Esophagus muscularis mucosa (tissue), 4 donors: ENCODE measurements at regions of chr2 and their contacts with region 1.

Region 1: DNA sequence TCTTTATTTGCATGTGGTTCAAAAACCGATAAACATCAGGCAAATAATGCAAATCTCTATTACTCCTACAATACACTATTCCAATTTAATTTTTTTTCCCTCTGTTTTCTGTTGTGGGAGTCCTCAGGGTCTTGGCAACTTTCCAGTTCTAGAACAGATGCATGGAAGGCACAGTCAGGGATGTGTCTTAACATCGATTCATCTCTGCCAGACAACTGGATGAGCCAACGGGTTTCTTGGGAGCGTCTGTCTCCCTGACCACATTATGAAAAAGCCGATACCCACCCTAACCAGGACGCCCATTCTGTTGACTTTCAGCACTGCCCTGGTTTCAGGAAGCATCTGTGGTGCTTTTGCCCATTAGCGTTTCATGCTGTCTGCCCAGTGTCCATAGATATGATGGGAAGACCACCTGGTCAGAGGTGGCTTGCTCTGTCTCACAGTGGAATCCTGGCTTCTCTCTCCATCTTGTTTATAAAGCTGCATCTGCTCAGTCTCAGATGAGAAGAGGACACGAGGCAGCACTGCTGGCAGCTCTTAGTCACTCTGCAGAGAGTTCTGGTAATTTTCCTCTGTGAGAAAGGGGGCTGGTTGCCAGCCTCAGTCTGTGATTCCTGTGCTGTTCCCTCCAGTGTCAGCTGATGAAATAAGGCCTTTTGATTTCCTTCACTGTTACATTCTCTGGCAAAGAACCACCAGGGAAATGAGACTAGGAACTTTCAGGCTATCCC is 57.9 kb upstream of the KCNE4 start:
- DNase-seq: peak; percentile 93
- H3K4me3 ChIP-seq: peak overlapping the region; percentile 15 to 45 (median 30)
- H3K27ac ChIP-seq: peak overlapping the region; percentile 85 to 92 (median 87)
- H3K4me1 ChIP-seq: peaks cover 24 to 34% (median 25%) of the 10 kb centered on the region in 4 donors
- H3K27me3 ChIP-seq: no peaks in the 10 kb centered on the region
- CTCF ChIP-seq: no peak
- EP300 ChIP-seq: no peak
- POLR2A ChIP-seq: no peak

Region 2: GRCh38 chr2:222769446-222769845 is 224.6 kb before region 1 on chr2:
- intact Hi-C with region 1: no loop called
- DNase-seq: no peak
- H3K4me3 ChIP-seq: no peak overlapping the region
- H3K27ac ChIP-seq: no peak overlapping the region
- H3K4me1 ChIP-seq: no peaks in the 10 kb centered on the region
- H3K27me3 ChIP-seq: no peaks in the 10 kb centered on the region
- CTCF ChIP-seq: no peak
- EP300 ChIP-seq: no peak
- POLR2A ChIP-seq: no peak

Region 3: GRCh38 chr2:223096235-223096970 is 102.3 kb after region 1 on chr2:
- intact Hi-C with region 1: loop called (anchors 5 kb)
- DNase-seq: no peak
- H3K4me3 ChIP-seq: no peak overlapping the region
- H3K27ac ChIP-seq: peak overlapping the region; percentile 29 to 66 (median 32)
- H3K4me1 ChIP-seq: peaks cover 10 to 49% (median 41%) of the 10 kb centered on the region in 4 donors
- H3K27me3 ChIP-seq: no peaks in the 10 kb centered on the region
- CTCF ChIP-seq: no peak
- EP300 ChIP-seq: no peak
- POLR2A ChIP-seq: no peak